ENCODE measurements at regions of chr3 and their contacts with region 1.

Region 1: GRCh38 chr3:15964605-15965442 is 167.0 kb upstream of the ANKRD28 start:
- DNase-seq: no peak
- H3K4me3 ChIP-seq: no peak overlapping the region
- H3K27ac ChIP-seq: no peak overlapping the region
- H3K4me1 ChIP-seq: no peaks in the 10 kb centered on the region
- H3K27me3 ChIP-seq: no peaks in the 10 kb centered on the region
- CTCF ChIP-seq: no peak

Region 2: DNA sequence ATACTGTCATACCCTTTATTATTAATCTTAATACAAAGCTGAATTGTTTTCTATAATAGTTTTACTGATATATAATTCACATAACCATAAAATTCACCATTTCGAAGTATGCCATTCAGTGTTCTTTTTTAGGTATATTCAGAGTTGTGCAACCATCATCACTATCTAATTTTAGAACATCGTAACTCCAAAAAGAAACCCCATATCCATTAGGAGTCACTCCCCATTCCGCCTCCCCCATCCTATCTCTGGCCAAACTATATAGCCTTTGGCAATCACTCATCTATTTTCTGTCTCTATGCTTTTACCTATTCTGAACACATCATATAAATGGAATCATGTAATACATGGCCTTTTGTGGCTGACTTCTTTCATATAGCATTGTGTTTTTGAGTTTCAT is 40.0 kb after region 1 on chr3:
- CTCF ChIA-PET with region 1: no interaction called
- dilution Hi-C with region 1: loop called (anchors 5 kb)
- in situ Hi-C with region 1: no loop called
- intact Hi-C with region 1: no loop called
- DNase-seq: no peak
- H3K4me3 ChIP-seq: no peak overlapping the region
- H3K27ac ChIP-seq: no peak overlapping the region
- H3K4me1 ChIP-seq: no peaks in the 10 kb centered on the region
- H3K27me3 ChIP-seq: no peaks in the 10 kb centered on the region
- CTCF ChIP-seq: no peak